Gastrocnemius medialis (tissue), 4 donors: ENCODE measurements at regions of chr5 and their contacts with region 1.

Region 1: GRCh38 chr5:59829386-59829785 is 64.1 kb downstream of the PDE4D start:
- DNase-seq: no peak
- ATAC-seq: no peak
- H3K4me3 ChIP-seq: no peak overlapping the region
- H3K27ac ChIP-seq: no peak overlapping the region
- H3K4me1 ChIP-seq: no peaks in the 10 kb centered on the region
- H3K27me3 ChIP-seq: no peaks in the 10 kb centered on the region
- CTCF ChIP-seq: no peak
- POLR2A ChIP-seq: no peak

Region 2: DNA sequence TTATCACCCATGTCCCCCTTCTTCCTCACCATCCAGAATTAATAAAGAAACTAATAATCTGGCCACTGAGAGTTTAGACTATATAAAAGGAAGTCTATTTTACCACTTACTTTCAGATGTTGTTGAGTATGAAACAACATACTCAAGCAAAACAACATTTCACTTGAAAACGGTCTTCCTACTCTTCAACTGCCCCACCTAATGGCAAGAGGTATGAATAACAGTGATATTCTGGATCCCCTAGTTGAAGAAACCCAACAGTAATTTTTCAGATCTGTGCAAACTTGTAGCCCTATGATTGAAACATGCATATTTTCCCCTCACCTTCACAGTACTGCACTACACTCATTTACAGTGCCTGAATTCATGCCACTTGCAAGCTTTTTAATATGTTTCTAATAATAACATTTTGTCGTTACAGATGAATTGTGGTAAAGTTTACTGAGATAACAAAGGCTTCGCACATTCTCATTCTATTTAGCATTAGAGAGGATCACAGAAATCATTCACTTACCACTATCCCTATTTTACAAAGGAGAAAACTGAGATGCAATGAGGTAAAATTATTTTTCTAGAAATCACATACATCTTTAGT is 332.1 kb after region 1 on chr5:
- in situ Hi-C with region 1: loop called in 1 of 4 experiments (anchors 25 kb)
- intact Hi-C with region 1: no loop called
- DNase-seq: no peak
- ATAC-seq: no peak
- H3K4me3 ChIP-seq: no peak overlapping the region
- H3K27ac ChIP-seq: no peak overlapping the region
- H3K4me1 ChIP-seq: no peaks in the 10 kb centered on the region
- H3K27me3 ChIP-seq: no peaks in the 10 kb centered on the region
- CTCF ChIP-seq: no peak
- POLR2A ChIP-seq: no peak